ENCODE measurements at regions of chr14 and their contacts with region 1.

Region 1: GRCh38 chr14:63896278-63896720 is 43.5 kb downstream of the SYNE2 start:
- DNase-seq: peak; percentile 78
- H3K4me3 Mint-ChIP-seq: peak overlapping the region; percentile 33
- H3K27ac Mint-ChIP-seq: peak overlapping the region; percentile 71
- H3K4me1 Mint-ChIP-seq: peaks cover 56% of the 10 kb centered on the region
- H3K27me3 Mint-ChIP-seq: no peaks in the 10 kb centered on the region
- CTCF ChIP-seq: no peak

Region 2: DNA sequence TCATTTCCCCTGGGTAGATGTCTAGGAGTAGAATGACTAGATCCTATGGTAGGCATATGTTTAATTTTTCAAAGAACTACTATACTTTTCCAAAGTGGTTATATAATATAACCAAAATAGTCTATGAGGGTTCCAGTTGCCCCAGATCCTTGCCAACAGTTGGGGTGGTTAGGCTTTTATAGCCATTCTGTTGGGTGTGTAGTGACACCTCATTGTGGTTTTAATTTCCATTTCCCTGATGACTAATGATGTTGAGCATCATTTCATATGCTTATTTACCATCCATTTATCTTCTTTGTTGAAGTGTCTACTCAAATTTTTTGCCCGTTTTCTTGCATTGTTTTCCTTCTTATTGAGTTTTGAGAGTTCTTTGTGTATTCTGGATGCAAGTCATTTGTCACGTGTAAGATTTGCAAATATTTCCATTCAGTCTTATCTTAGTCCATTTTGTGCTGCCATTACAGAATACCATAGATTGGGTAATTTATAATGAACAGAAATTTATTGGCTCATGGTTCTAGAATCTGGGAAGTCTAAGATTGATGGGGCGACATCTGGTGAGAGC is 38.8 kb before region 1 on chr14:
- CTCF ChIA-PET with region 1: interaction called, 3 read pairs
- intact Hi-C with region 1: loop called (anchors 5 kb)
- DNase-seq: no peak
- H3K4me3 Mint-ChIP-seq: no peak overlapping the region
- H3K27ac Mint-ChIP-seq: peak overlapping the region; percentile 53
- H3K4me1 Mint-ChIP-seq: peaks cover 46% of the 10 kb centered on the region
- H3K27me3 Mint-ChIP-seq: no peaks in the 10 kb centered on the region
- CTCF ChIP-seq: no peak

Region 3: DNA sequence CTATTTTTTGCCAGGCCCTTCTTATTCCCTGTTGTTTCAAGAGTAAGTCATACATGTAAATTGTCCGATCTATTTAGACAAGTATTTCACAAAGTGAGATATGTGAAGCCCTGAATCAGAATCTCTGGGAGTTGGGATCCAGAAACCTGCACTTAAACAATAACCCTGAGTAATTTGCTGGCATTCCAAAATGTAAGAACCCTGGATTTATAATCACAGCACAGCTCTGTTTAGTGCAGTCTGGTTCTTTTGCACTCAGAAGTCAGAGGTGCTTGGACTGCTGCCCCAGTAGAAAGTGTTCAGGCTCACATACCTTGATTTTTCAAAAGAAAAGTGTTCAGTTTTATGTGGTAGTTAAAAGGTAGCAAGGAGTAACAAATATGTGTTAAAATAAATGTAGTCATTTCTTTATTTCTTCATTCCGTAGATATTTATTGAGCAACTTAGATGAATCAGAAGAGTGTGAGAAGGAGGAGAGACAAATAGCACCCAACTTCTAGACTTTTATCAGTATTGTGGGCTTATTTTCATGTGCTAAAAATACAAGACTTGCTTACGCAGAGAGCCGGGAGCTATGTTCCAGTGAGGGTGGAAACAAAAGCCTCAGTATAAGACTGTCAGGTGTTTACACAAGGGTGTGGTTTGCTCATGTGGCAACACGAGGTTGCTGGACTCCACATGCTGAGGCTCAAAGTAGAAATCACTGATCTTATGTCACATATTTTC is 26.6 kb after region 1 on chr14:
- CTCF ChIA-PET with region 1: interaction called, 7 read pairs
- intact Hi-C with region 1: loop called (anchors 2 kb)
- DNase-seq: peak; percentile 69
- H3K4me3 Mint-ChIP-seq: peak overlapping the region; percentile 38
- H3K27ac Mint-ChIP-seq: no peak overlapping the region
- H3K4me1 Mint-ChIP-seq: peaks cover 18% of the 10 kb centered on the region
- H3K27me3 Mint-ChIP-seq: no peaks in the 10 kb centered on the region
- CTCF ChIP-seq: no peak